Head of caudate nucleus (tissue), 42 donors: ENCODE measurements at regions of chr11 and their contacts with region 1.

Region 1: GRCh38 chr11:119474682-119475596 is 52.0 kb upstream of the THY1 start:
- DNase-seq: peak; percentile 55 to 93 (median 84)

Region 2: DNA sequence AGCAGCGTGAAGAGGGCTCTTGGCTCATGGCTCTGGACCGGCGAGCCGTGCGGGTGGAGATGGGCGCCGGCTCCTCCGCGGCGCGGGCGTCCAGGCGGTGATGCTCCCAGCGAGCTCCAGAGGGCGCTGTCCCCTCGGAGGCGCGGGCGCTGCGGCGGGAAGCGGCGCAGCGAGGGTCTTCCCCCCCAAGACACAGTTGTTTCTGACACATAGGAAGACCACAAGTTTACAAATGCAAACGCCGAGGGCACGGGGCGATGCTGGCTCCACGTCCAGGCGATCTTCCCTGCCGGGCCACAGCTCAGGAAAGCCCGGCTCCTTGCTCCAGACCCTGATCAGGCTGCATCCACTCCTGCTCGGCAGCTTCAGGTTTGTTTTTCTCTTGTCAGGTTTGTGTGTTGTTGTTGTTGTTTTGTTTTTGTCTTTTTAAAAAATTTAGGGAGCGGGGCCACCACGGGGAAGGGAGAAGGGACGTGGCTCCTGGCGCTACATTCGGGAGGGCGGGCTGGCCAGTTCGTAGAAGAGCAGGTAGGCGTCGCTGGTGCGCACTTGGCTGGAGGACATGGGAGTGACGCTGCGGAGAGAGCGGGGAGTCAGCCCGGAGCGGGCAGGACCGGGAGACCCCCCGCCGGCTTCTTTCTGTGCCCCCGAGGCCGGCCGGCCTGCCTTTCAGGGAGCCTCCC is 118.4 kb before region 1 on chr11:
- intact Hi-C with region 1: loop called (anchors 10 kb)
- DNase-seq: peak in 40 of 42 donors; percentile 60 to 89 (median 78)

Region 3: GRCh38 chr11:119381181-119381988 is 93.6 kb before region 1 on chr11 and contains the start of gene USP2:
- intact Hi-C with region 1: loop called (anchors 5 kb)
- DNase-seq: peak; percentile 98 to 100 (median 99)

Region 4: GRCh38 chr11:119712459-119713358 is 237.8 kb after region 1 on chr11:
- intact Hi-C with region 1: no loop called
- DNase-seq: no peak

Region 5: GRCh38 chr11:119942583-119943297 is 467.8 kb after region 1 on chr11:
- intact Hi-C with region 1: no loop called
- DNase-seq: no peak